ENCODE measurements at regions of chr14 and their contacts with region 1.

Region 1: DNA sequence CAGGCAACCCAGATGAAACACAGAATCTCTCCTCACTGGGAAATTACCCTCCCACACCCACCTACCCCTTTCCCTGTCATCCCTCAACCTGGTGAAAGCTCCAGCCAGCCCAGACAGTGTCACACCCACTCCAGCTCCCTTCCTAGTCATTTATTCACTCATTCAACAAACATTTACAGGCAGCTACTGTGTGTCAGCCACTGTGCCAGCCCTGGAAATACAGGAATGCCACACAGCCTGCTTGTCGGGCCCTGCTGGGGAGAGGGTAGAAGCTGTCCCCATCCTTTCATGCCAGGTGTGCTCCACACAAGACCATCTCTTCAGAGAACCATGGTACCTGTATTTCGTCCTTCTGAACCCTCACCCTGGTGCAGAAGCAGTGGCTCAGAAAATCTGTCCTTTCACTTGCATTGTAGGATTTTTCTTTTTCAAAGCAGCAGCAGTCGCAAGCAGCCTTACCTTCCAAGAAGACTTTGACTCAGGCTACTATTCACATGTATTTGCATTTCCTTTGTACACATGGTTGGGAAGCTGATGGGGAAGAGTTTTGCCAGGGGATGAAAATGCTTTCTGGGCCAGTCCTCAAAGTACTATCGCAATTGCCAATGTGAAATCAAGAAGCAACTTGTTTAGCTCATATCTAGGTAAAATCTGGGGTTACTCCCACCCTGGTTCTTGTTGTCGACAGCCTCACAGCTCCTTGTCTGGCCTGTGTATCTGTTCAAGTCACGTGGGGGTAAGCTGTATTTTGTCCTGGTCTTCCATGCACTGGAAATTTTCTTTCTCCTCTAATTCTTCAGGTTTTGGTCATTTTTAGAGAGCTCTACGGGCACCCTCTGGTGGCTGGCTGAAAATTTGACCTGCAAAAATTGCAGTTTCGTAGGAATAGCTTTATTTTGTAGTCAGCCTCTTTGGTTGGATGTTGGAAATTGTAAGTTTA is 147.4 kb upstream of the EGLN3 start:
- DNase-seq: peak; percentile 41

Region 2: DNA sequence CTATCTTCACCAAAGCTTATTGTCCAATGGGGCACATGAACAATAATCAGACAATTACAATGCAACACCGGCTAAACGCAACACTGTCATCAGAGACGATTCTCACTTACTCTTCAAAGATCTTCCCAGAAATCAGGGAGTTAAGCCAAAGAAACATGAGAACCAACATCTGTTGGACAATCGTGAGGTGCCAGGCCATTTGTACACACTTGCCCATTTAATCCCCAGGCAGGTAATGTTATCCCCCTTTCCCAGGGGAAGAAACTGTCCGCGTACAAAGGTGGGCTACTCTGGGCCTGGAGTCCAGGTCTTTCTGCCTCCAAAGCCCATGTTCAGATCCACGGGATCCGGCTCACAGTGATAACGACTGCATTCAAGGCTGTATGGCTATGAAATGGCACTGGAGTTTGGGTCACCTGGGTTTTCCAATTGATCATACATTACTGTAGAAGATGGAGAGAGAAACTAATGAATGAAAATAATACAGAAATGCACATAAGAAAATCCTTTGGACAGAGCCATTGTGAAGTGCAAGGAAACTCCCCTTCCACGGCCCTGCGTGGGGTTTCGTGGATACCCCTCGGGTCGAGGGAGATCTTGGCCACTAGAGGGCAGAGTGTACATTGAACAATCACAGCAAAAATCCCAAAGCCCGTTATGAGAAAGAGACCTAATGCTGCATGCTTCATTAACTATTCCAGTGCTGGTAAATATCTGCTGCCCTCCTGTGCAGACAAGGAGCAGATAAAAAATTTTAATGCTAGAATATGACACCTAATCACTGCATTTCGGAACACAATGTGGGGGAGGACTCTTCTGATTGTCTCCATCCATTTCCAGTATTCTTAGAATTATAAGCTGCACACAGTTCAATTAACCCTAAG is 258.9 kb before region 1 on chr14:
- CTCF ChIA-PET with region 1: interaction called, 14 read pairs
- POLR2A ChIA-PET with region 1: no interaction called
- DNase-seq: peak; percentile 69

Region 3: GRCh38 chr14:33848706-33849454 is 249.4 kb before region 1 on chr14:
- CTCF ChIA-PET with region 1: interaction called, 33 read pairs
- POLR2A ChIA-PET with region 1: no interaction called
- DNase-seq: peak; percentile 73

Region 4: GRCh38 chr14:34113991-34114390 is 15.7 kb after region 1 on chr14:
- CTCF ChIA-PET with region 1: interaction called, 10 read pairs
- POLR2A ChIA-PET with region 1: no interaction called
- DNase-seq: no peak

Region 5: DNA sequence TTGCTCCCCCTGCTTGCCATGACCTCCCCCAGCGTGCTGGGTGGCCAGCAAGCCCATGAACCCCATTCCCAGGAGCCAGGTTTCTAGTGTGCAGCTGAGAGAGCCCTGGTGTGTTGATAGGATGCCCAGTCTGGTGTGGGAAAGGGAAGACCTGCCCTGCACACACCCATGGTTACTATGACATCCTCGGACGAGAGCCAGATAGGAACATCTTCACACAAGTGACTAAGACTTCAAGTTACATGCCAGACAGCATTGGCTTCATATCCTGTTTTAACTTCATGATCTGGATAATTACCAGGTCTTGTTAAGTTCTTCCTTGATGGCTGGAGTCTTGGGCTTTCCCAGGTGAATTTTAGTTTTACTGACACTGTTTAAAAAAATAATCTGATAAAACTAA is 49.1 kb after region 1 on chr14:
- CTCF ChIA-PET with region 1: no interaction called
- POLR2A ChIA-PET with region 1: no interaction called
- DNase-seq: no peak

Region 6: GRCh38 chr14:34425095-34425851 is 327.0 kb after region 1 on chr14:
- CTCF ChIA-PET with region 1: interaction called, 11 read pairs
- POLR2A ChIA-PET with region 1: no interaction called
- DNase-seq: no peak